MCF 10A (cell line): ENCODE measurements at regions of chr11 and their contacts with region 1.

Region 1: GRCh38 chr11:65314501-65315203 is at the start of gene CDC42EP2:
- DNase-seq: peak; percentile 81
- H3K4me3 Mint-ChIP-seq: peak within 1 kb of the TSS; percentile 85
- H3K27ac Mint-ChIP-seq: peak within 1 kb of the TSS; percentile 83
- H3K4me1 Mint-ChIP-seq: peaks cover 36% of the 10 kb centered on the region
- H3K27me3 Mint-ChIP-seq: no peaks in the 10 kb centered on the region
- CTCF ChIP-seq: no peak
- total RNA-seq, gene CDC42EP2: 24.5 and 35.0 TPM in 2 replicates

Region 2: GRCh38 chr11:64659417-64660144 is 655.1 kb before region 1 on chr11:
- CTCF ChIA-PET with region 1: no interaction called
- POLR2A ChIA-PET with region 1: no interaction called
- intact Hi-C with region 1: no loop called
- DNase-seq: peak; percentile 79
- H3K4me3 Mint-ChIP-seq: no peak overlapping the region
- H3K27ac Mint-ChIP-seq: peak overlapping the region; percentile 66
- H3K4me1 Mint-ChIP-seq: peaks cover 15% of the 10 kb centered on the region
- H3K27me3 Mint-ChIP-seq: no peaks in the 10 kb centered on the region
- CTCF ChIP-seq: no peak

Region 3: GRCh38 chr11:65225279-65226102 is 89.2 kb before region 1 on chr11:
- CTCF ChIA-PET with region 1: interaction called, 17 read pairs
- POLR2A ChIA-PET with region 1: interaction called, 15 read pairs
- intact Hi-C with region 1: no loop called
- DNase-seq: peak; percentile 72
- H3K4me3 Mint-ChIP-seq: peak overlapping the region; percentile 71
- H3K27ac Mint-ChIP-seq: peak overlapping the region; percentile 35
- H3K4me1 Mint-ChIP-seq: peaks cover 5% of the 10 kb centered on the region
- H3K27me3 Mint-ChIP-seq: no peaks in the 10 kb centered on the region
- CTCF ChIP-seq: peak; percentile 36

Region 4: GRCh38 chr11:65274735-65275682 is 39.6 kb before region 1 on chr11:
- CTCF ChIA-PET with region 1: interaction called, 335 read pairs
- POLR2A ChIA-PET with region 1: interaction called, 143 read pairs
- intact Hi-C with region 1: loop called (anchors 1 kb)
- DNase-seq: peak; percentile 88
- H3K4me3 Mint-ChIP-seq: no peak overlapping the region
- H3K27ac Mint-ChIP-seq: no peak overlapping the region
- H3K4me1 Mint-ChIP-seq: peaks cover 15% of the 10 kb centered on the region
- H3K27me3 Mint-ChIP-seq: no peaks in the 10 kb centered on the region
- CTCF ChIP-seq: peak; percentile 90

Region 5: DNA sequence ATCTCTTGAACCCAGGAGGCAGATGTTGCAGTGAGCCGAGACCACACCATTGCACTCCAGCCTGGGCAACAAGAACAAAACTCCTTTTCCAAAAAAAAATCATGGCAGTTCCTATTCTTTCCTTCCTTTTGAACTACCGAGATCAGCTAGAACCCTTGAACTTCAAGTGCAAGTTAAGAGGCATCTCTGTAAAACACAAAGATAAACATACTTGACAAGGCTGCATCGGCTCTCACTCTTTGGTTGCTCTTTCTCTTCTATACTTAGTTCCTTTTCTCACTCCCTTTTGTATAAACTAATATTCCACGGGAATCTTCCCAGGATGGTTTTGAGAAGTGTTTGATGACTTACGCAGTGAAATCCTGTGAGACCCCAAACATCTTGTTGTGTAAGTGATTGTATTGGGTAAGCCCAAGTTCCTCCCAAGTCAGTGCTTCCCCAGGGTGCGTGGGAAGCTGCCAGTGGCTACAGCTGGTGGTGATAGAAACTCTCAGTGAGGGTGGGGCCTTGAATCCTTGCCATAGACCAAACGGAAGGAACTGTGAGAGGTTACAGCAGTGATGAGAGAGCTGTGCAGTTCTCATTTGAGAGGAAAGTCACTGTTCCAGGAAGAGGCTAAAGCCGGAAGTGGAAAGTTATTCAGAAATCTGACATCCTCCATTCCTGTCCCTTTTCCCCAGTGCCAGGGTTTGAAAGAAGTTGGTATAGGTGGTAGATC is 24.0 kb before region 1 on chr11:
- CTCF ChIA-PET with region 1: interaction called, 31 read pairs
- POLR2A ChIA-PET with region 1: interaction called, 21 read pairs
- intact Hi-C with region 1: no loop called
- DNase-seq: peak; percentile 95
- H3K4me3 Mint-ChIP-seq: no peak overlapping the region
- H3K27ac Mint-ChIP-seq: peak overlapping the region; percentile 72
- H3K4me1 Mint-ChIP-seq: peaks cover 20% of the 10 kb centered on the region
- H3K27me3 Mint-ChIP-seq: no peaks in the 10 kb centered on the region
- CTCF ChIP-seq: no peak

Region 6: DNA sequence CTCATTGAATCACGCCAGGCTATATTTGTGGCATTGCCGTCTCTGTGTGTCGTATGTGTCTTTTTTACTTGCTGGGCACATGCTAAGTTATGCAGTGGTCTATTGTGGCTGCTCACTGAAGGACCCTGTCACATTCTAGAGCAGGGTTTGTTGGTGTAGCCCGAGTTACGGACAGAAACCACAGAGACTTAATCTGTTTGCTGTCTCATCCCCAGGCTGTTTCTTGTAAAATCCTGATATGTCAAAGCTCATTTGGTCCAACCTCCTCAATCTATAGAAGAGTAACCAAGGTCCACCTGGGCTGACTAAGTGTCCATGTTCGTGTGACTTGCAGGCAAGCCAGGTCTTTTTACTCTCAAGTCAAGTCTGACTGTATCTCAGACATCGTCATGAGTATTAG is 24.0 kb after region 1 on chr11:
- CTCF ChIA-PET with region 1: interaction called, 273 read pairs
- POLR2A ChIA-PET with region 1: interaction called, 57 read pairs
- intact Hi-C with region 1: no loop called
- DNase-seq: no peak
- H3K4me3 Mint-ChIP-seq: no peak overlapping the region
- H3K27ac Mint-ChIP-seq: peak overlapping the region; percentile 59
- H3K4me1 Mint-ChIP-seq: peaks cover 26% of the 10 kb centered on the region
- H3K27me3 Mint-ChIP-seq: no peaks in the 10 kb centered on the region
- CTCF ChIP-seq: no peak

Region 7: DNA sequence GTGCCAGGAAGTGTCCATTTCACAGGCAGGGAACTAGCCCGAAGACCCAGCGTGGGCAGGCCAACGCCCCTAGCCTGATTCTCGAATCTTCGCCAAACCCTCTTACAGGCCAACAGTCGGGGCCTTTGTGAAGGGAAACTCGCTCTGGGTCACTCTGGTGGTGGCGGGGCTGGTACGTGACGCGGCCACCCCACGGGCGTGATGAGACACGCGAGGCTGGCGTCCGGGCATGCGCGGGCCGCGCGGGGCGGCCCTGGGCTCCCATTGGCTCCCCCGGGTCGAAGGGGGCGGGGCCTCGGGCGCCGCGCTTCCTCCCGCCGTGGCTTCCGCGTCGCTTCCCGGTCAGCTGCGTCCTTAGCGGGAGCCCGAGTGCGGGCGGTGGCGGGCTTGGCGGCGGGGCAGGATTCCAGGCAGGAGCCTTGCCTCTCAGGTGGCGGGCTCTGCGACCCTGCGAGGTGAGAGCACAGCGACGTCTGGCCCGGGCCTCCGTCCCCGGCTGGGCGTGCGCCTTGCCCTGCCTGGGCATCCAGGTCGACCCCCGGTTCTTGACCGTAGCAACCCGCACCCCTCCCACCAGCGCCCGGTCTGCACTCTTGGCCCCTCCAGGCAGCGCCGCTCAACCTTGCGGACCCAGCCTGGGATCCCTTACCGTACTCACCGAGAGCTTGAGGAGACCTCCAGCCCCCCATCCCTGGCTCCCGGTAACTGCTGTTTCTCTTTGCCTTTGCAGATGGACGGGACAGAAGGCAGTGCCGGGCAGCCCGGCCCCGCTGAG is 71.8 kb after region 1 on chr11 and contains the start of gene FRMD8:
- CTCF ChIA-PET with region 1: no interaction called
- POLR2A ChIA-PET with region 1: no interaction called
- intact Hi-C with region 1: no loop called
- DNase-seq: peak; percentile 83
- H3K4me3 Mint-ChIP-seq: peak within 1 kb of the TSS; percentile 87
- H3K27ac Mint-ChIP-seq: peak within 1 kb of the TSS; percentile 92
- H3K4me1 Mint-ChIP-seq: peaks cover 50% of the 10 kb centered on the region
- H3K27me3 Mint-ChIP-seq: no peaks in the 10 kb centered on the region
- CTCF ChIP-seq: no peak
- total RNA-seq, gene FRMD8: 18.9 and 21.7 TPM in 2 replicates

Region 8: DNA sequence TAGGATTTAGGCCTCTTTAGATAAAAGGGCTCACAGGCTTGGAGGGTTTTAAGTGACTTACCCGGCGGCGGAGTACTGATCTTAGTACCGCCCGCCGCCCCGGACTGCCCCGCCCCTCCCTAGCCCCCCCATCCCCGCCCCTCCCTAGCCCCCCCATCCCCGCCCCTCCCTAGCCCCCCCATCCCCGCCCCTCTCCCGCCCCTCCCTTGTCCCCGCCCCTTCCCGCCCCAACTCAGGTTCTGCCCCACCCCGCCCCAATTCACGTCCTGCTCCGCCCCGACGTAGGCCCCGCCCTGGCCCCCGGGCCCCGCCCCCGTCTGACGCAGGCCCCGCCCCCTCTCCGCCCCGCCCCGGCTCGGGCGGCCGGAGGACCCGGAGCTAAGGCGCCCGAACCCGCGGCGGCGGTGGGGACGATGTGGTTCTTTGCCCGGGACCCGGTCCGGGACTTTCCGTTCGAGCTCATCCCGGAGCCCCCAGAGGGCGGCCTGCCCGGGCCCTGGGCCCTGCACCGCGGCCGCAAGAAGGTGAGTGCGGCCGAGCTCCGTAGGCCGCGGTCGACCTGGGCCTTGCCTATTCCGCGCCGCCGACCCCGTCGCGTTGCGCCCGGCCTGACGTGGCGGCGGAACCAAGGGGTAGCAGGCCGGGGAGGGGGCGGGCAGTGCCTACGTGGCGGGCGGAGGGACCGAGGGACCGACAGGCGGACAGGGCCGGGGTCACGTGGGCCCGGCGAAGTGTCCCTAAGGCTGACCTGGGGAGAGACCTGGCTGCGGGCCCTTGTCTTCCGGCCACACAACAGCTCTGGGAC is 210.3 kb after region 1 on chr11 and contains the start of gene SCYL1:
- CTCF ChIA-PET with region 1: no interaction called
- POLR2A ChIA-PET with region 1: no interaction called
- intact Hi-C with region 1: no loop called
- DNase-seq: peak; percentile 71
- H3K4me3 Mint-ChIP-seq: peak within 1 kb of the TSS; percentile 88
- H3K27ac Mint-ChIP-seq: peak within 1 kb of the TSS; percentile 90
- H3K4me1 Mint-ChIP-seq: peaks cover 10% of the 10 kb centered on the region
- H3K27me3 Mint-ChIP-seq: no peaks in the 10 kb centered on the region
- CTCF ChIP-seq: no peak
- total RNA-seq, gene SCYL1: 70.9 and 75.5 TPM in 2 replicates

Region 9: DNA sequence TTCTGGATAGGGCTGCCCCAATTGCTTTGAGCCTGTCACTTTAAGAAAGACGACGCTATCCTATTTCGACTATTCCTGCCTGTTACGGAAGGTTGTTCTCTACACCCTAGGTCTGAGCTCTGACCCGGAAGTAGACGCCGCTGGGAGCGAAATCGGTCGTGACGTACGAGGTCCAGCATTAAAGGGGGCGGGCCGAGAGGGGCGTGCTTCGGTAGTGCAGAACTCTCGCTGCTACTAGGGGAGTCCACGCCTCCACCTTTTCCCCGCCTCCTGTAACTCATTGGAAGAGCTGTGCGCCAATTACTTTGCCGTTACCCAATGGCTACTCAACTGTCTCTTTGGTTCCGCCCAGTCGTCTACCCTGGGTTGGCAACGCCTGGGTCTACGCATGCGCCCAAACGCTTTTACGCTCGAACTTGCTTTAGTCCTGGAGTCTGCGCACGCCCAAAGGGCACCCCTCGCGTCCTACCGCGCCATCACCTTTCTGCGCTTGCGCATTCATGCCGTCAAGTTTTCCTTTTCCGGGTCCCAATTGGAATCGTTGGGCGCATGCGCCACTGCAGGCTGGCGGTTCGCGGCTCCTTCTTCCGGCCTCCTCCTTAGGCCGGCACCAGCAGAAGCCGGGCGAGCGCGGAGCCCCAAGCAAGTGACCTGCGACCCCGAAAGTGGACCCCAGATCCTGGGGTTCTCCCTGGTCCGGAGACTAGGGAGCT is 300.7 kb after region 1 on chr11 and contains the start of gene PCNX3:
- CTCF ChIA-PET with region 1: no interaction called
- POLR2A ChIA-PET with region 1: no interaction called
- intact Hi-C with region 1: no loop called
- DNase-seq: peak; percentile 100
- H3K4me3 Mint-ChIP-seq: peak within 1 kb of the TSS; percentile 91
- H3K27ac Mint-ChIP-seq: peak within 1 kb of the TSS; percentile 96
- H3K4me1 Mint-ChIP-seq: peaks cover 26% of the 10 kb centered on the region
- H3K27me3 Mint-ChIP-seq: no peaks in the 10 kb centered on the region
- CTCF ChIP-seq: no peak
- total RNA-seq, gene PCNX3: 40.9 and 45.8 TPM in 2 replicates